GM10248 (cell line): ENCODE measurements at regions of chr5 and their contacts with region 1.

Region 1: DNA sequence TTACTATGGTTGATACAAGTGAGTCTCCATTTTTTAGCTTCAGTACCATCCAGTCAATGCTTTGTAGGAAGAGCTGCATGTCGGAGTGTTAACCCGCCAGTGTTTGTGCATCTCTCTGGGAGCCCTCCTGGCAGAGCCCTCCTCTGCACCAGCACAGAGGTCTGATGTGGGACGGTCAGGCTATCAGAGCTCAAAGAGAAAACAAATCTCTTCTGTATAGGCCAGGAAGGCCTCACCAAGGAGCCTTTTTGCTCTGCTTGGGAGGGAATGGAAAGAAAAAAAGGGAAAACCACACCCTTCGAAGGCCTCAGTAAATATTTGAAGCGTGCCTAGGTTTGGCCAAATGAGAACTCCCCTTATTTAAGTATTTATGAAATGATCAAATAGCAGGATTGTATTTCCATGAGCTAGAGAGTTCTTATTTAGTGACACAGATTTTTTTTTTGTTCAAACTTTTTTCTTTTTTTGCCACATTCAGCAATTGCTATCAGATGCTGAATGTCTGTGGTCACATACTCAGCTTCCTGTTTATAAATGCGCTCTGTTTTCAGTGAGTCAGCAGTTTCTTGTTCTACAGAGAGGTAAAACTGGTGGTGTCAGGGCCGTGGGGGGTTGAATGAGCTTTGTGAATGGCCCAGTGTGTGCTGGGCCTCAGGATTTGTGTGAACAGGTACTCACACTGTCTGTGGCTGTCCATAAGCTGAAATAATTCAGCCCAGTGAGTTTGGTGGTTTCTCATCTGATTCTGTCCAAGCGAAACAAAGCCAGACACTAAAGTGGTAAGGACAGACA is 226.6 kb downstream of the SNX18 start:
- DNase-seq: peak; percentile 28
- CTCF ChIP-seq: no peak

Region 2: GRCh38 chr5:54703565-54704255 is 40.5 kb before region 1 on chr5:
- CTCF ChIA-PET with region 1: no interaction called
- POLR2A ChIA-PET with region 1: no interaction called
- DNase-seq: no peak
- CTCF ChIP-seq: no peak

Region 3: GRCh38 chr5:54713923-54714581 is 30.1 kb before region 1 on chr5:
- CTCF ChIA-PET with region 1: no interaction called
- POLR2A ChIA-PET with region 1: no interaction called
- DNase-seq: no peak
- CTCF ChIP-seq: no peak

Region 4: DNA sequence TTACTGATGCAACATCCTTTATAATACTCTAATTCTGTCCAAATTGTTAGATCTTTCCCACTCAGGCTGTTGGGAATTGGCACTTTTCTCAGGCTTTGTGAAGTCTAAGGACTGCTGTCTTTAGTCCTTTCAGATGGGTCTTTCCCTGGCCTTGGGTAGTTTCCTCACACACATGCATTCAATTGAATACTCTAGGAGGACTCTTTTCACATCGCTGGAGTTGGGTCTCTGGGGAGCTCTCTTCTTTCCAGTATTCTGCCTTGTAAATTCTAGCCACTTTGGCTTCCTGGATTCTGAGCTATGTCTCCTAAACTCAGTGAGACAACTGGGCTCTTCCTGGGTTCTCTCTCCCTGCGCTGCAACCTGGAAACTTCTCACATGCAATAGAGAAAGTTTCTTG is 11.1 kb before region 1 on chr5:
- CTCF ChIA-PET with region 1: interaction called, 10 read pairs
- POLR2A ChIA-PET with region 1: no interaction called
- DNase-seq: no peak
- CTCF ChIP-seq: no peak